ENCODE measurements at regions of chr5 and their contacts with region 1.

Region 1: GRCh38 chr5:171323806-171324633 is 15.0 kb downstream of the TLX3 start:
- DNase-seq: no peak
- H3K4me3 ChIP-seq: no peak overlapping the region
- H3K27ac ChIP-seq: peak overlapping the region in 1 of 2 experiments; percentile 97; a peak in 2 of 4 replicates
- H3K4me1 ChIP-seq: peaks cover 0 to 26% of the 10 kb centered on the region in 2 experiments; a peak in 2 of 4 replicates
- H3K27me3 ChIP-seq: no peaks in the 10 kb centered on the region
- CTCF ChIP-seq: no peak
- EP300 ChIP-seq: no peak
- RAD21 ChIP-seq: no peak

Region 2: DNA sequence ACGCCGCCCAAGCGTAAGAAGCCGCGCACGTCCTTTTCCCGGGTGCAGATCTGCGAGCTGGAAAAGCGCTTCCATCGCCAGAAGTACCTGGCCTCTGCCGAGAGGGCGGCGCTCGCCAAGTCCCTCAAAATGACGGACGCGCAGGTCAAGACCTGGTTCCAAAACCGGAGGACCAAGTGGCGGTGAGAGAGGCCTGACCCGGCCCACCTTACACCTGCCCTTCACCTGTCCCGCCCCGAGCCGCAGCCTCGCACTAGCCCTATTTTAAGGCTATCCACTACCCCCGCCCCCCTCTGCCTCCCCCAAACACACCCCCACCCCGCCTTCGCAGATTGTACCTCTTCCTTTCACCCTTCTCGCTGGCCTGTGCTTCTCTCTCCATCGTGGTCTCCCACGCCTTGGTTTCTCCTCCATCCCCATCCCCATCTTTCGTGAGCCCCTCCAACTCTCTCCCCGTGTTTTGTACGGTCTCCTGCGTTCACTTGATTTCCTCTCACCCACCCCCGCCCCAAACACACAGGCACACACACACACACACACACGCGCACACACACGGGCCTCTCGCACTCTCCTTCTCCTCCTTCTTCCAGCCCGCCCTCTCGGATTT is 13.7 kb before region 1 on chr5:
- CTCF ChIA-PET with region 1: interaction called, 46 read pairs
- POLR2A ChIA-PET with region 1: interaction called, 20 read pairs
- DNase-seq: no peak
- H3K4me3 ChIP-seq: peak overlapping the region; percentile 86 to 87
- H3K27ac ChIP-seq: peak overlapping the region in 1 of 2 experiments; percentile 81; a peak in 1 of 4 replicates
- H3K4me1 ChIP-seq: peaks cover 0 to 40% of the 10 kb centered on the region in 2 experiments; a peak in 2 of 4 replicates
- H3K27me3 ChIP-seq: no peaks in the 10 kb centered on the region; the same call in 1 of the 2 replicates
- CTCF ChIP-seq: no peak
- EP300 ChIP-seq: no peak
- RAD21 ChIP-seq: no peak

Measured in SK-N-SH (cell line).